ENCODE measurements at regions of chr6 and their contacts with region 1.

Region 1: DNA sequence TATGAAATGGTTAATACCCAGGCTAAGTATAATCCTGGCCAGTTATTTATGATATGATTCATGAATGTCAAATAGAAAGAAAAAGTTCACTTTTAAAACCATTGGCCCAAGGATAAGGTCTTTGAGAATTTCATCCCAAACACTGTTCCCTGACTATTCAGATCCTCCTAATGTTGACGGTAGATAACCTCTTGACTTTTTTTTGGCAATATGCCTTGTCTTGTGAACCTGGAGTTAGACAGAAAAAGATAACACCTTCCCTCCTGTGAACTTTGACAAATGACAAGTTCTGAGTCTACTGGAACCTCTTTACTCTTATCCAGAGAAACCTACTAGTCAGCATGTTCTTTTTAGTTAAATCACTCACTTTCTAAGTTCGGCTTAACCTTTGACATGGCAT is 166.8 kb upstream of the PREP start:
- DNase-seq: peak in 1 of 2 experiments; percentile 72
- H3K4me3 ChIP-seq: no peak overlapping the region
- H3K4me3 Mint-ChIP-seq: no peak overlapping the region
- H3K27ac Mint-ChIP-seq: no peak overlapping the region
- H3K4me1 ChIP-seq: peaks cover 41% of the 10 kb centered on the region
- H3K4me1 Mint-ChIP-seq: peaks cover 27% of the 10 kb centered on the region
- H3K27me3 ChIP-seq: no peaks in the 10 kb centered on the region
- H3K27me3 Mint-ChIP-seq: peaks cover 8% of the 10 kb centered on the region
- CTCF ChIP-seq: no peak

Region 2: DNA sequence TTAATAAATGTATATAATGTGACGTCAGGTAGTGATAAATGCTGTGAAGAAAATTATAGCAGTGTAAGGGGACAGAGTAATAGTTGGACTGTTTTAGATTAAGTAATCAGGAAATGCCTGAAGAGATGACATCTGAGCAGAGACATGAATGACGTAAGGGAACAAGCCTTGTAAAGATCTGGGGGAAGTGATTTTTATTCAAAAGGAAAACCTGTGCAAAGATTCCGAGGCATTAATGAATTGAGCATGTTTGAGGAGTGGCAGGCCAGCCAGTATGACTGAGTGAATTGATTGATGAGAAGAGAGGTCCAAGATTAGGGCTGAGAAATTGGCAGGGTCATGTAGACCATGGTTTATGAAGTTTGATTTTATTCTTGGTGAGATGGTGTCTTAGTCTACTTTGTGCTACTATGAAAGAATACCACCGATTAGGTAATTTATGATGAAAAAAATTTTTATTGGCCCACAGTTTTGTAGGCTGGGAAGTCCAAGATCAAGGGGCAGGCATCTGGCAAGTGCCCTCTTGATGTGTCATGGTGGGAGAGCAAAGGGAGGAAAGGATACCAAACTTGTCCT is 517.7 kb before region 1 on chr6:
- CTCF ChIA-PET with region 1: no interaction called
- POLR2A ChIA-PET with region 1: no interaction called
- intact Hi-C with region 1: no loop called
- DNase-seq: no peak
- H3K4me3 ChIP-seq: no peak overlapping the region
- H3K4me3 Mint-ChIP-seq: no peak overlapping the region
- H3K27ac Mint-ChIP-seq: no peak overlapping the region
- H3K4me1 ChIP-seq: peaks cover 5% of the 10 kb centered on the region
- H3K4me1 Mint-ChIP-seq: no peaks in the 10 kb centered on the region
- H3K27me3 ChIP-seq: no peaks in the 10 kb centered on the region
- H3K27me3 Mint-ChIP-seq: no peaks in the 10 kb centered on the region
- CTCF ChIP-seq: no peak

Region 3: DNA sequence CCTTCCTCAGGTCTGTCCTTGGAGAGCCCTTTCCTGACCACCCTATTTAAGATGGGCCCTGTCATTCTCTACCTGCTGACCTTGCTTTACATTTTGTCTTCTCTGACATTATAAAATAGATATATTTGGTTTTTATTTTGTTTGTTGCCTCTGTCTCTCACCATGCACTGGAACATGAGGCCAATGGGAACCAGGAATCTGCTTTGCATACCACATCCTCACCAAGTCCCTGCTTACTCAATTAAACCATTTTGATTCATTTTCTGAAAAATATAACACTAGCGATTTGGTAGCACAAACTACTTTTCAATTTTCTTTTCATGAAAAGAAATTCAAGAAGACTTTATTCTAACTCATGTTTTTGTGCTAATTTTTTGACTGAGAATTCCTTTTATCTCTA is 357.1 kb before region 1 on chr6:
- CTCF ChIA-PET with region 1: no interaction called
- POLR2A ChIA-PET with region 1: no interaction called
- intact Hi-C with region 1: no loop called
- DNase-seq: no peak
- H3K4me3 ChIP-seq: no peak overlapping the region
- H3K4me3 Mint-ChIP-seq: no peak overlapping the region
- H3K27ac Mint-ChIP-seq: no peak overlapping the region
- H3K4me1 ChIP-seq: no peaks in the 10 kb centered on the region
- H3K4me1 Mint-ChIP-seq: no peaks in the 10 kb centered on the region
- H3K27me3 ChIP-seq: no peaks in the 10 kb centered on the region
- H3K27me3 Mint-ChIP-seq: no peaks in the 10 kb centered on the region
- CTCF ChIP-seq: no peak

Region 4: GRCh38 chr6:105374010-105374420 is 195.7 kb before region 1 on chr6:
- CTCF ChIA-PET with region 1: no interaction called
- POLR2A ChIA-PET with region 1: no interaction called
- intact Hi-C with region 1: no loop called
- DNase-seq: peak; percentile 85 to 88
- H3K4me3 ChIP-seq: no peak overlapping the region
- H3K4me3 Mint-ChIP-seq: no peak overlapping the region
- H3K27ac Mint-ChIP-seq: peak overlapping the region; percentile 82
- H3K4me1 ChIP-seq: peaks cover 44% of the 10 kb centered on the region
- H3K4me1 Mint-ChIP-seq: peaks cover 26% of the 10 kb centered on the region
- H3K27me3 ChIP-seq: no peaks in the 10 kb centered on the region
- H3K27me3 Mint-ChIP-seq: no peaks in the 10 kb centered on the region
- CTCF ChIP-seq: no peak

Region 5: GRCh38 chr6:105606831-105607463 is 37.2 kb after region 1 on chr6:
- CTCF ChIA-PET with region 1: no interaction called
- POLR2A ChIA-PET with region 1: no interaction called
- intact Hi-C with region 1: loop called (anchors 2 kb)
- DNase-seq: peak; percentile 5 to 39
- H3K4me3 ChIP-seq: no peak overlapping the region
- H3K4me3 Mint-ChIP-seq: no peak overlapping the region
- H3K27ac Mint-ChIP-seq: no peak overlapping the region
- H3K4me1 ChIP-seq: peaks cover 31% of the 10 kb centered on the region
- H3K4me1 Mint-ChIP-seq: peaks cover 6% of the 10 kb centered on the region
- H3K27me3 ChIP-seq: no peaks in the 10 kb centered on the region
- H3K27me3 Mint-ChIP-seq: no peaks in the 10 kb centered on the region
- CTCF ChIP-seq: no peak

Region 6: DNA sequence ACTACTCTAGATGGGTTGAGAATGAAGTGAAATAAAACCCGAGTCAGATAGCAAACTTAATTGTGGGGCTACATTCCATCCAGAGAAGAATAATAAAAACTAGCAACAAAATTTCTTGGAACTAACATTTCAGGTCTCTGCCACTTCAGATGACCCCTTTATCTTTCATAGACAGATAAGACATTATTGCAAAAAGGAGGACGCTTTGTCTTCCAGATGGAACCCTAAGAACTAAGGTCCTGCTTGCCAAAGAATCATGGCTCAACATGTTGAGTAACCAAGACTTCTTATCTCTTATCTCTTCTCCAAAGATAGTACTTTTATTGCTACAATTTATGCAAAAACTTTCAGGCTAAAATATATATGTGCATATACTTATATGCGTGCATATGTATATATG is 54.3 kb after region 1 on chr6:
- CTCF ChIA-PET with region 1: no interaction called
- POLR2A ChIA-PET with region 1: no interaction called
- intact Hi-C with region 1: loop called (anchors 1 kb)
- DNase-seq: peak; percentile 18 to 40
- H3K4me3 ChIP-seq: no peak overlapping the region
- H3K4me3 Mint-ChIP-seq: no peak overlapping the region
- H3K27ac Mint-ChIP-seq: no peak overlapping the region
- H3K4me1 ChIP-seq: peaks cover 33% of the 10 kb centered on the region
- H3K4me1 Mint-ChIP-seq: peaks cover 34% of the 10 kb centered on the region
- H3K27me3 ChIP-seq: no peaks in the 10 kb centered on the region
- H3K27me3 Mint-ChIP-seq: no peaks in the 10 kb centered on the region
- CTCF ChIP-seq: no peak

Region 7: DNA sequence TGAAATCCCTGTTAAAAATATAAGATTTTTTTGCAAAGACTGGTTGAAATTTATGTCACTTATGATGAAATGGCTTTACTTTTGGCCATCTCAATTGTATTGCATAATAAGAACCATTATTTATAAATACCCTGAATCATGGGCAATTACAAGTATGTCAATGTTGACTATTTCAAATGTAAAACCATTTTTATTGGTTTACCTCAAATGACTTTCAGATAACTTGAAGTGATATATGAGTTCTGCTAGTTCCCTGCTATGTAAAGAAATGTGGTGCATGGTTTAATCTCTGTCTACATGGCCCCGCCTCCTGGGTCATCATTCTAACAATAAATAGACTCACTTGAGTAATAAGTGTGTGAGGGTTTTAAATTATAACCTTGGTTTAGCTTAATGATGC is 108.8 kb after region 1 on chr6:
- CTCF ChIA-PET with region 1: no interaction called
- POLR2A ChIA-PET with region 1: no interaction called
- intact Hi-C with region 1: loop called (anchors 1 kb)
- DNase-seq: peak; percentile 50 to 56
- H3K4me3 ChIP-seq: no peak overlapping the region
- H3K4me3 Mint-ChIP-seq: no peak overlapping the region
- H3K27ac Mint-ChIP-seq: no peak overlapping the region
- H3K4me1 ChIP-seq: peaks cover 25% of the 10 kb centered on the region
- H3K4me1 Mint-ChIP-seq: no peaks in the 10 kb centered on the region
- H3K27me3 ChIP-seq: no peaks in the 10 kb centered on the region
- H3K27me3 Mint-ChIP-seq: no peaks in the 10 kb centered on the region
- CTCF ChIP-seq: no peak

Measured in Caco-2 (cell line).